WTC11 (cell line): ENCODE measurements at regions of chr1 and their contacts with region 1.

Region 1: DNA sequence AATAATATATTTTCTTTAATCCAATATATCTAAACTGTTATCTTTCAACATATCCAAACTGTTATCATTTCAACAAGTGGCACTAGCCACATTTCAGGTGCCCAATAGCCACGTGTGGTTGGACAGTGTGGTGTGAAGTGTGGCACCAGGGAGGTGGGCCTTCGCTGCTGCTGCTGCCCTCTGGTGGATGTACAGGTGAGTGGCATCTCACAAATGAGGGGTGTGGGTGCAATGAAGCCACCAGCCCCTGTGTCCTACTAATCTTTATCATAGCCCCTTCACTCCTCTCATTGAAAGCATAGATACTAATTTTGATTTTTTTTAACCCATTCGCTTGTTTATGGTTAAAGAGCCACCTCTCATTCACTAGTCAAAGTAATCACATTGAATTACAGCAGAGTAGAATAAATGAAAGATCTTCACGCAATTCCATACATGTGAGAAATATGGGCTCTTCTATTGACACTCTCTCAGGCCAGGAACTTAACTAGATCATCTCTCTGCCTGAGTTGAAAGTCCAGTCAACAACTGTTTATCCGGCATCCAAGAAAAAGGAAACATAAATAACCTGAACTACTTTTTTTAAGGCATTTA is 499.2 kb downstream of the OMA1 start:
- DNase-seq: peak; percentile 57
- ATAC-seq: peak; percentile 79
- H3K4me3 Mint-ChIP-seq: no peak overlapping the region
- H3K27ac Mint-ChIP-seq: no peak overlapping the region
- H3K4me1 Mint-ChIP-seq: peaks cover 5% of the 10 kb centered on the region
- H3K27me3 Mint-ChIP-seq: no peaks in the 10 kb centered on the region
- CTCF ChIP-seq: peak; percentile 86

Region 2: GRCh38 chr1:57966751-57967406 is 80.5 kb before region 1 on chr1:
- CTCF ChIA-PET with region 1: interaction called, 12 read pairs
- POLR2A ChIA-PET with region 1: no interaction called
- DNase-seq: peak; percentile 73
- ATAC-seq: peak; percentile 99
- H3K4me3 Mint-ChIP-seq: no peak overlapping the region
- H3K27ac Mint-ChIP-seq: no peak overlapping the region
- H3K4me1 Mint-ChIP-seq: peaks cover 31% of the 10 kb centered on the region
- H3K27me3 Mint-ChIP-seq: no peaks in the 10 kb centered on the region
- CTCF ChIP-seq: no peak

Region 3: DNA sequence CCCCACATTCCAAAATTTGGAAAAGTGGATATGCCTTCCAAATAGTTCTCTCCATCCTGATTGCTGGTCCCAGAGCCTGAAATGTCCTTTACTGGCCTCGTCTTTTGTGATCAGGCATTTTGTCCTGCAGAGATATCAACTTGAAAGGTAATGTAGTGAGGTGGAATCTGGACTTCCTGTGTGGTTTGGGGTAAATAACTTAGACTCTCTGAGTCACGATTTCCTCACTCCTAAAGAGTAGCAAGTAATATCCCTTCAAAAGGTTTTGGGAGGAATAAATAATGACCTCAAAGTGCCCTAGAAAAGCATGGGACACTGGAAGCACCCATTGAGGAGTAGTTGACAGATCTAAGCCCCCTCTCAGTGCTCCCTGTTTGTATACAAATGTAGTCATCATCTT is 72.6 kb after region 1 on chr1:
- CTCF ChIA-PET with region 1: no interaction called
- POLR2A ChIA-PET with region 1: no interaction called
- DNase-seq: no peak
- ATAC-seq: no peak
- H3K4me3 Mint-ChIP-seq: no peak overlapping the region
- H3K27ac Mint-ChIP-seq: no peak overlapping the region
- H3K4me1 Mint-ChIP-seq: no peaks in the 10 kb centered on the region
- H3K27me3 Mint-ChIP-seq: no peaks in the 10 kb centered on the region
- CTCF ChIP-seq: no peak